Body of pancreas (tissue), 4 donors: ENCODE measurements at regions of chr14 and their contacts with region 1.

Region 1: GRCh38 chr14:23588884-23589598 is 10.5 kb upstream of the JPH4 start:
- DNase-seq: peak; percentile 96 to 98 (median 98)
- ATAC-seq: peak; percentile 100
- H3K4me3 ChIP-seq: no peak overlapping the region
- H3K27ac ChIP-seq: peak overlapping the region in 3 of 4 donors; percentile 42 to 60 (median 58)
- H3K4me1 ChIP-seq: peaks cover 20% of the 10 kb centered on the region
- H3K27me3 ChIP-seq: no peaks in the 10 kb centered on the region
- CTCF ChIP-seq: peak; percentile 74 to 99 (median 98)
- POLR2A ChIP-seq: no peak

Region 2: GRCh38 chr14:23085458-23085857 is 503.6 kb before region 1 on chr14:
- intact Hi-C with region 1: no loop called
- DNase-seq: no peak
- ATAC-seq: no peak
- H3K4me3 ChIP-seq: no peak overlapping the region
- H3K27ac ChIP-seq: no peak overlapping the region
- H3K4me1 ChIP-seq: peaks cover 7% of the 10 kb centered on the region
- H3K27me3 ChIP-seq: no peaks in the 10 kb centered on the region
- CTCF ChIP-seq: no peak
- POLR2A ChIP-seq: no peak

Region 3: GRCh38 chr14:23903442-23903841 is 314.4 kb after region 1 on chr14:
- intact Hi-C with region 1: loop called (anchors 10 kb)
- DNase-seq: no peak
- ATAC-seq: no peak
- H3K4me3 ChIP-seq: no peak overlapping the region
- H3K27ac ChIP-seq: no peak overlapping the region
- H3K4me1 ChIP-seq: no peaks in the 10 kb centered on the region
- H3K27me3 ChIP-seq: no peaks in the 10 kb centered on the region
- CTCF ChIP-seq: no peak
- POLR2A ChIP-seq: no peak

Region 4: DNA sequence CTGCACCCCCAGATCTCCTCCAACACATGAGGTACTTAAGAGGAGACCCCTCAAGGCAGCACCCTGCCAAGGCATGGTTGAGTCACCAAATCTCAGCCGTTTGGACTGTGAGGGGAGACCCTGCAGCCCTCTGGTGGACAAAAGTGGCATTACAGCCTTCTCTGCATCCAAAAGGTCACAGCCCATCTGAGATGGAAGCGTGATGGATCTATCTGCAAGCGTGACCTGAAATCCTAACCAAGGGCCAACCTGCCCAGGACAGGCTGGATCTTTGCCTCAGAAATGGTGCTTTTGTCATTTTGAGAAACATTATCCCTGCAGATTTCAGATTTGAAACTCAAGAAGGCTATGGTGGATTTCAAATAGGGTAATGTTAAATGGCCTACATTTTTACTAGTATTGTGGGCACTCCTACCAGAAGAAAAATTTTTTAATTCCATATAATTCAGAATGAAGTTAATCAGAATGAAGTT is 340.8 kb after region 1 on chr14:
- intact Hi-C with region 1: loop called (anchors 10 kb)
- DNase-seq: peak; percentile 82 to 91 (median 84)
- ATAC-seq: peak; percentile 80
- H3K4me3 ChIP-seq: no peak overlapping the region
- H3K27ac ChIP-seq: no peak overlapping the region
- H3K4me1 ChIP-seq: peaks cover 15% of the 10 kb centered on the region
- H3K27me3 ChIP-seq: no peaks in the 10 kb centered on the region
- CTCF ChIP-seq: peak; percentile 64 to 91 (median 73)
- POLR2A ChIP-seq: no peak